Dendritic cell treated with granulocyte-macrophage colony-stimulating factor and Interleukin-4, amounts not matched to agents 40 ng/mL and 50 ng/mL, for 4 days (primary cell): ENCODE measurements at regions of chr10 and their contacts with region 1.

Region 1: DNA sequence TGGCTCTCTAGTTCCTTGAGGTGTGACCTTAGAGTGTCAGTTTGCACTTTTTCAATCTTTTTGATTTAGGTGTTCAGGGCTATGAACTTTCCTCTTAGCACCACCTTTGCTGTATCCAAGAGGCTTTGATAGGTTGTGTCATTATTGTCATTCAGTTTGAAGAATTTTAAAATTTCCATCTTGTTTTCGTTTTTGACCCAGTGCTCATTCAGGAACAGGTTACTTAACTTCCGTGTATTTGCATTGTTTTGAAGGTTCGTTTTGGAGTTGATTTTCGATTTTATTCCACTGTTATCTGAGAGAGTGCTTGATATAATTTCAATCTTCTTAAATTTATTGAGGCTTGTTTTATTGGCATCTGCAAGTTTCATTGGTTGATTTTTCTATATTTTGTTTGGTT is 37.3 kb downstream of the FANK1 start:
- H3K4me3 Mint-ChIP-seq: no peak overlapping the region
- H3K27ac Mint-ChIP-seq: no peak overlapping the region
- H3K4me1 Mint-ChIP-seq: no peaks in the 10 kb centered on the region
- H3K27me3 Mint-ChIP-seq: peaks cover 6% of the 10 kb centered on the region

Region 2: GRCh38 chr10:125982260-125982948 is 48.7 kb after region 1 on chr10:
- intact Hi-C with region 1: no loop called
- H3K4me3 Mint-ChIP-seq: no peak overlapping the region
- H3K27ac Mint-ChIP-seq: peak overlapping the region; percentile 62
- H3K4me1 Mint-ChIP-seq: peaks cover 42% of the 10 kb centered on the region
- H3K27me3 Mint-ChIP-seq: peaks cover 3% of the 10 kb centered on the region

Region 3: GRCh38 chr10:126021833-126022521 is 88.3 kb after region 1 on chr10:
- intact Hi-C with region 1: no loop called
- H3K4me3 Mint-ChIP-seq: no peak overlapping the region
- H3K27ac Mint-ChIP-seq: no peak overlapping the region
- H3K4me1 Mint-ChIP-seq: peaks cover 5% of the 10 kb centered on the region
- H3K27me3 Mint-ChIP-seq: peaks cover 12% of the 10 kb centered on the region

Region 4: GRCh38 chr10:126504063-126504739 is 570.5 kb after region 1 on chr10:
- intact Hi-C with region 1: loop called (anchors 1 kb)
- H3K4me3 Mint-ChIP-seq: no peak overlapping the region
- H3K27ac Mint-ChIP-seq: no peak overlapping the region
- H3K4me1 Mint-ChIP-seq: no peaks in the 10 kb centered on the region
- H3K27me3 Mint-ChIP-seq: no peaks in the 10 kb centered on the region

Region 5: GRCh38 chr10:126598003-126598402 is 664.3 kb after region 1 on chr10:
- intact Hi-C with region 1: loop called (anchors 2 kb)
- H3K4me3 Mint-ChIP-seq: no peak overlapping the region
- H3K27ac Mint-ChIP-seq: no peak overlapping the region
- H3K4me1 Mint-ChIP-seq: no peaks in the 10 kb centered on the region
- H3K27me3 Mint-ChIP-seq: no peaks in the 10 kb centered on the region

Region 6: GRCh38 chr10:126749015-126749655 is 815.4 kb after region 1 on chr10:
- intact Hi-C with region 1: loop called (anchors 2 kb)
- H3K4me3 Mint-ChIP-seq: no peak overlapping the region
- H3K27ac Mint-ChIP-seq: no peak overlapping the region
- H3K4me1 Mint-ChIP-seq: no peaks in the 10 kb centered on the region
- H3K27me3 Mint-ChIP-seq: peaks cover 1% of the 10 kb centered on the region